ENCODE measurements at regions of chr19 and their contacts with region 1.

Region 1: GRCh38 chr19:36915992-36916830 is at the starts of genes ZNF568 and ZNF829:
- DNase-seq: peak; percentile 92
- H3K4me3 Mint-ChIP-seq: peak within 1 kb of the TSS; percentile 92
- H3K27ac Mint-ChIP-seq: peak within 1 kb of the TSS; percentile 95
- H3K4me1 Mint-ChIP-seq: peaks cover 21% of the 10 kb centered on the region
- H3K27me3 Mint-ChIP-seq: no peaks in the 10 kb centered on the region
- total RNA-seq, gene ZNF568: 4.4 and 4.9 TPM in 2 replicates
- total RNA-seq, gene ZNF829: 5.3 and 5.4 TPM in 2 replicates

Region 2: DNA sequence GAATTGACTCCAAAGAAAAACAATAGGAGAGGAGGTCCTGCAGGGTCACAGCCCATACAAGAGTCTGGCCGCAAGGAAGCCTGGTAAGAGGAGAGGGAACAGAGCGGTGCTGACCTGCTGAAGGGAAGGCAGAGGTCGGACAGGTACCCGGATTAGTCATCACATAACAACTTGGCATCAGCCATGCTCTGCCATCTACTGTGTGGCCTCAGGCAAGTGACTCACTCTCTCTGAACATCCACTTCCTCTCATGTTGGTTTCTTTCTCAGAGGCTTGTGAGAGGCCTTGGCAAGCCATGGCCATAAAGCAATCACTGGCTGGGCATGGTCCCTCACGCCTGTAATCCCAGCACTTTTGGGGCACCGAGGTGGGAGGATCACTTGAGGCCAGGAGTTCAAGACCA is 783.7 kb before region 1 on chr19:
- intact Hi-C with region 1: loop called (anchors 5 kb)
- DNase-seq: peak; percentile 17
- H3K4me3 Mint-ChIP-seq: peak overlapping the region; percentile 7
- H3K27ac Mint-ChIP-seq: peak overlapping the region; percentile 78
- H3K4me1 Mint-ChIP-seq: peaks cover 30% of the 10 kb centered on the region
- H3K27me3 Mint-ChIP-seq: peaks cover 1% of the 10 kb centered on the region

Region 3: GRCh38 chr19:36573020-36573885 is 343.0 kb before region 1 on chr19 and contains the start of gene ZNF529:
- intact Hi-C with region 1: loop called (anchors 2 kb)
- DNase-seq: peak; percentile 85
- H3K4me3 Mint-ChIP-seq: peak within 1 kb of the TSS; percentile 89
- H3K27ac Mint-ChIP-seq: peak within 1 kb of the TSS; percentile 98
- H3K4me1 Mint-ChIP-seq: peaks cover 31% of the 10 kb centered on the region
- H3K27me3 Mint-ChIP-seq: no peaks in the 10 kb centered on the region
- total RNA-seq, gene ZNF529: 20.3 and 20.7 TPM in 2 replicates

Region 4: DNA sequence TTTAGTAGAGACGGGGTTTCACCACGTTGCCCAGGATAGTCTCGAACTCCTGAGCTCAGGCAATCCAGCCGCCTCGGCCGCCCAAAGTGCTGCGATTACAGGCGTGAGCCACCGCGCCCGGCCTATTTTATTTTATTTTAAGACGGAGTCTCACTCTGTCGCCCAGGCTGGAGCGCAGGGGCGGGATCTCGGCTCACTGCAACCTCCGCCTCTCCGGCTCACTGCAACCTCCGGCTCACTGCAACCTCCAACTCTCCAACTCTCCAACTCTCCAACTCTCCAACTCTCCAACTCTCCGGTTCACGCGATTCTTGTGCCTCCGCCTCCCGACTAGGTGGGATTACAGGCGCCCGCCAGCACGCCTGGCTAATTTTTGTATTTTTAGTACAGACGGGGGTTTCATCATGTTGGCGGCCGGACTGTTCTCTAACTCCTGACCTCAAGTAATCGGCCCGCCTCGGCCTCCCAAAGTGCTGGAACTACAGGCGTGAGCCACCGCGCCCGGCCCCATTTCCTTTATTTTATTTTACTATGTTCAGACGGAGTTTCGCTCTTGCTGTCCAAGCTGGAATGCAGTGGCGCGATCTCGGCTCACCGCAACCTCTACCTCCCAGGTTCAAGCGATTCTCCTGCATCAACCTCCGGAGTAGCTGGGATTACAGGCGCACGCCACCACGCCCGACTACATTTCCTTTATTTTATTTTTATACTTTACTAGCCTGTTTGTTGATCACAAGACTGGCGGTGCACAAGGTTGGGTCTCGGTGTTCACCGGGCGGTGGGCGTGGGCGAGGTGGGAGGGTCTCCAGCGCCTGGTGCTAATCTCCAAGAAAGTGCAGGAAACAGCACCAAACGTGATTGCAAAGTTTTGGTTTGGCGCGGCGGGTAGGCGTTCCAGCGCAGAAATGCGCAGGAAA is 119.9 kb before region 1 on chr19:
- intact Hi-C with region 1: loop called (anchors 1 kb)
- DNase-seq: no peak
- H3K4me3 Mint-ChIP-seq: peak overlapping the region; percentile 85
- H3K27ac Mint-ChIP-seq: no peak overlapping the region
- H3K4me1 Mint-ChIP-seq: no peaks in the 10 kb centered on the region
- H3K27me3 Mint-ChIP-seq: no peaks in the 10 kb centered on the region

Region 5: DNA sequence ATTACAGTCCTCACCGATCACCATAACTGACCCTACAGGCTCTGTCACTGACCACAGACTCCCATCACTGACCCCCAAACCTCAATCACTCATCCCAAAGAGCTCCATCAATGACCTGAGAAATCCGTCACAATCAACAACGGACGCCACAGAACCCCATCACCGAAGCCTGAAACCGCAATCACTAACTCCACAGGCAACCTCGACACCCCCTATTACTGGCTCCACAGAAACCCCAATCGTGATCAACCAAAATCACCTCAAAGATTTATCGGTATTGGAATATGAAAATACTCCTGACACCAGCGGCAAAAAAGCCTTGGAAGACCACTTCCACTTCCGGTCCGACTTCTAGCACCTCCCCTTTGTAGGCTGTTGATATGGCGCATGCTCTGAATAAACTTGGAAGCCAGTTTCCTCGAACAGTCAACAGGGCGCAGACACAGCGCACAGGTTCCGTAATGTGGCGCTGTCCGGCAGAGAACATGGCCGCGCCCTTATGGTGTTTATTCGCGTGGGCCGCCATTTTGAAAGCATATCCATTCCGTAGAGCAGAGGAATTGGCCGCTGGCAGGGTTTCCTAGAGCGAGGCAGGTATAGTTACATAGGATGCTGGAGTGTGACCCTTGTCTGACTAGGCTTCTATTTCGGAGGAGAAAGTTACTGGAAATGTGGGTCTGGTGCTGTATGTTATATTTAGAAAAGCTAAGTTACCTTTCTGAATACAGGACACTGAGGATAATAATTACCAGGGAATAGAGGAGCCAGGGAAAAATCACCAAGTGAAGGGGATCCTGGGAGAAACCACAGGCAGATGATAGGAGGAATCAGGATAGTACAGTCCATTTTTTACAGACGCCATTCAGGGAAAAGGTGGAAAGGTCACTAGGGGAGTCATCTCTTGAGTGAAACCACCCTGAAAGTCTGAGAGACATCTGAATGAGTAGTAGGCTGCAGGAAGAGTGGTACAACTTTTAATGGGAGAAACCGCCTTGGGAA is 256.5 kb after region 1 on chr19 and contains the start of gene ZNF585A:
- intact Hi-C with region 1: loop called (anchors 1 kb)
- DNase-seq: peak; percentile 74
- H3K4me3 Mint-ChIP-seq: no peak within 1 kb of the TSS
- H3K27ac Mint-ChIP-seq: no peak within 1 kb of the TSS
- H3K4me1 Mint-ChIP-seq: no peaks in the 10 kb centered on the region
- H3K27me3 Mint-ChIP-seq: no peaks in the 10 kb centered on the region
- total RNA-seq, gene ZNF585A: 1.2 and 2.6 TPM in 2 replicates

Region 6: DNA sequence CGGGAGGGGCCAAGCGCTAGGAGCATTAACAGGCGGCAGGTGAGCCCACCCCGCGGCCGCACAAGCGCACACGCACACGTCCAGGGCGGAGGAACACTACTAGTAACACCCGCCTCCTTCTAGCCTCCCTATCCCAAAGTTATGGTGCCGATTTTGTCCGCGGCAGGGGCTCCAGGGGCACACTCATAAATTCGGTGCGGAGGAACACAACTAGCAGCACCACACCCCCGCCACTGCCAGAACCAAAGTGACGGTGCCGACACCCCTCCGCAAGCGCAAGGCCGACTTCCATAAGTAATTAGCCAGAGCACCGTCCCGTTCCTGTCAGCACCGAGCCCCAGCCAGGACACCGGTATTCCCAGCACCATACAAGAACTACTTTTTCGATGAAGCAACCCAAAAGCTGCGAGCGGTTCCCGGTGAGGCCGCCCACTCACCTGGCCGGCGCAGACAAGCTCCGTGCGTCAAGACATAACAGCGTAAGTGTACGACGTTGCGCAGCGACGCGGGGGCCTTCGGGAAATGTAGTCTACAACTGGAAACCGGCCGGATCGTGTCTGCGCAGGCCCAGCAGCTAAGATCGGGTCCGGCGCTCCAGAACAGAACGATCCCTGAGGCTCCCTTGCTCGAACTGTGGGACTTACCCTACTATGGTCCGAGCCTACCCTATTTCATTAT is 678.2 kb after region 1 on chr19 and contains the starts of genes ZNF540 and ZNF571:
- intact Hi-C with region 1: loop called (anchors 1 kb)
- DNase-seq: peak; percentile 81
- H3K4me3 Mint-ChIP-seq: peak within 1 kb of the TSS; percentile 88
- H3K27ac Mint-ChIP-seq: peak within 1 kb of the TSS; percentile 91
- H3K4me1 Mint-ChIP-seq: peaks cover 24% of the 10 kb centered on the region
- H3K27me3 Mint-ChIP-seq: no peaks in the 10 kb centered on the region
- total RNA-seq, gene ZNF540: 0.39 and 0.70 TPM in 2 replicates
- total RNA-seq, gene ZNF571: 0.64 and 1.4 TPM in 2 replicates